H1 (cell line): ENCODE measurements at regions of chr1 and their contacts with region 1.

Region 1: DNA sequence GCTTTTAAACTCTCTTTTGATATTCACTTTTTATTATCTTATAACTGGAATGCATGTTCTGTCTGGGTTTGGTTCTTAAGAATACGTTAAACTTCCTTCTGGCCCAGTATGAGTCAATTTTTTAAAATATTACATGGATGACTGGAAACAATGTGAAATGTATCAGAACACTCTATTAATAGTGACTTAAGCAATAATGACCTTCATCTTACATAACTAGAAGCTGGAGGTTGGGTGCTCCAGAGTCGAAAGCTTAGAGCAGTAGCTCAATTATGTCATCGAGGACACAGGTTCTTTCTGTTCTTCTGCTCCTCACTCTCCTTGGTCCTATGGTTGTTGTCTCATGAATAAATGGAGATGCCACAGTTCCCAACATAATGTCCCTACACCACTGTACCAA is 91.6 kb upstream of the FOXD3 start:
- DNase-seq: no peak
- H3K4me3 ChIP-seq: no peak overlapping the region
- H3K27ac ChIP-seq: no peak overlapping the region
- H3K4me1 ChIP-seq: no peaks in the 10 kb centered on the region
- H3K27me3 ChIP-seq: peaks cover 0 to 2% (median 0%) of the 10 kb centered on the region in 4 experiments; a peak in 1 of 7 replicates
- CTCF ChIP-seq: no peak
- EP300 ChIP-seq: no peak
- POLR2A ChIP-seq: no peak
- RAD21 ChIP-seq: no peak

Region 2: GRCh38 chr1:63189677-63190076 is 41.0 kb before region 1 on chr1:
- CTCF ChIA-PET with region 1: interaction called, 14 read pairs
- POLR2A ChIA-PET with region 1: no interaction called
- DNase-seq: peak in 1 of 2 experiments; percentile 70
- H3K4me3 ChIP-seq: peak overlapping the region in 1 of 4 experiments; percentile 23; a peak in 1 of 8 replicates
- H3K27ac ChIP-seq: no peak overlapping the region
- H3K4me1 ChIP-seq: peaks cover 2 to 21% (median 10%) of the 10 kb centered on the region in 4 experiments; a peak in 5 of 7 replicates
- H3K27me3 ChIP-seq: peaks cover 0 to 2% (median 0%) of the 10 kb centered on the region in 4 experiments; a peak in 2 of 7 replicates
- CTCF ChIP-seq: peak in 2 of 3 experiments; percentile 58 to 71; a peak in 3 of 4 replicates
- EP300 ChIP-seq: no peak
- POLR2A ChIP-seq: no peak
- RAD21 ChIP-seq: peak; percentile 54 to 70

Region 3: GRCh38 chr1:63264161-63264560 is 33.4 kb after region 1 on chr1:
- CTCF ChIA-PET with region 1: no interaction called
- POLR2A ChIA-PET with region 1: no interaction called
- DNase-seq: no peak
- H3K4me3 ChIP-seq: no peak overlapping the region
- H3K27ac ChIP-seq: no peak overlapping the region
- H3K4me1 ChIP-seq: no peaks in the 10 kb centered on the region
- H3K27me3 ChIP-seq: no peaks in the 10 kb centered on the region; a peak in 1 of 7 replicates
- CTCF ChIP-seq: peak in 2 of 3 experiments; percentile 4 to 14; a peak in 2 of 4 replicates
- EP300 ChIP-seq: no peak
- POLR2A ChIP-seq: no peak
- RAD21 ChIP-seq: peak in 1 of 2 experiments; percentile 23; a peak in 1 of 4 replicates

Region 4: DNA sequence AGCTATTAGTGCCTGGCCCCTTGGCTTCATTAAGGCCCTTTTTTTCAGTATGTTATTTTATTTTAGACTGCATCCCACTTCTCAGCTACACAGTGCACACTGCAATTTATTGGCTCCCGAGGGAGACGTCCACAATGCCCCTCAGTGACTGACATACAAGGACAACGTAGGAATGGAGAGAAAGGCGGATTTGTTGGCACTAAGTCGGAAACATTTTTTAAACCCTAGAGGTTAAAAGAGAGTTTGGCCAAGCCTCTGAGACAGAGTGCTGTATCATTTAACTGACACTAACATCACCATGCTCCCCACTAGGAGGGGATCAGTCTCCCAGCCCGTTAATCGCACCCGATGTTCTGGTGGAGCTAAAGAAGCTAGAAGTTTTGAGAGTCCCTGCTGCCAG is 45.9 kb after region 1 on chr1:
- CTCF ChIA-PET with region 1: no interaction called
- POLR2A ChIA-PET with region 1: no interaction called
- DNase-seq: no peak
- H3K4me3 ChIP-seq: no peak overlapping the region
- H3K27ac ChIP-seq: no peak overlapping the region
- H3K4me1 ChIP-seq: peaks cover 0 to 9% (median 0%) of the 10 kb centered on the region in 4 experiments; a peak in 3 of 7 replicates
- H3K27me3 ChIP-seq: no peaks in the 10 kb centered on the region
- CTCF ChIP-seq: peak in 1 of 3 experiments; percentile 1; a peak in 1 of 4 replicates
- EP300 ChIP-seq: no peak
- POLR2A ChIP-seq: no peak
- RAD21 ChIP-seq: peak in 1 of 2 experiments; percentile 8; a peak in 1 of 4 replicates